Mammary epithelial cell (primary cell): ENCODE measurements at regions of chr5 and their contacts with region 1.

Region 1: DNA sequence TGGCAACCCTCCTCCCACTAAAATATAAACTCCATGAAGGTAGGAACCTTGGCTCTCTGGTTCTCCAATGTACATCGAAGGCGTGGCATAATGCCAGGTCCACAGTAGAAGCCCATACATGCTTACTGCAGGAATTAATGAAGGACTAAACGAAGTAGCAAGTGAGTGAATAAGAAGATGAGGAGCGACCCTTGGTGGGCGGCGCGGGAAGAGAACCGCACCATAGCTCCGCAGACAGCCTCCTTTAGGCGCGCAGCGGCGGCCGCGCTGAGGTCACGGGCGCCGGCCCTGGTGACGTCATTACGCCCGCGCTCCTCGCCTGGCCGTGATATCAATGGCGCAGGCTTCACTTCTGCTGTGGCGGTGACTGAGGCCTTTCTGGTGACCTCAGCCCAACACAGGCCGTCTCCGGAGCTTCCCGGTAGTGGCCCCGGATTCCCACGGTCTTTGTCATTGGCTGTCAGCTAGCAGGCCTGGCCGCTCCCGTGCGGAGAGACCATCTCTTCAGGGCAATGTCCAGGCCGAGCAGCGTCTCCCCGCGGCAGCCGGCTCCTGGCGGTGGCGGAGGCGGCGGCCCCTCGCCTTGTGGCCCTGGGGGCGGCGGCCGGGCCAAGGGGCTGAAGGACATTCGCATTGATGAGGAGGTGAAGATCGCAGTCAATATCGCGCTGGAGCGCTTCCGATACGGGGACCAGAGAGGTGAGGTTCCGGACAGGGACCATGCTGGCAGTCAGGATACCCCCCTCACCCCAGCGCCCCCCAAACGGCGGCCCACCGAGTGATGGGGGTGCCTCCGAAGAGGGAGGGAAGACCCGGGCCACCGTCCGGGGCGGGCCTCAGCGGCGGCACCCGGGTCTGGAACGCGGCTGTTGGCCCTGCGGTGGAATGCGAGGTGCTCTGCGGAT is at the start of gene YTHDC2:
- DNase-seq: peak; percentile 79
- H3K4me3 ChIP-seq: peak within 1 kb of the TSS; percentile 68 to 79 (median 75)
- H3K27ac ChIP-seq: peak within 1 kb of the TSS; percentile 88
- H3K4me1 ChIP-seq: peaks cover 26% of the 10 kb centered on the region
- H3K27me3 ChIP-seq: no peaks in the 10 kb centered on the region
- CTCF ChIP-seq: peak; percentile 7 to 19
- total RNA-seq, gene YTHDC2: 31.3 to 32.1 TPM

Region 2: DNA sequence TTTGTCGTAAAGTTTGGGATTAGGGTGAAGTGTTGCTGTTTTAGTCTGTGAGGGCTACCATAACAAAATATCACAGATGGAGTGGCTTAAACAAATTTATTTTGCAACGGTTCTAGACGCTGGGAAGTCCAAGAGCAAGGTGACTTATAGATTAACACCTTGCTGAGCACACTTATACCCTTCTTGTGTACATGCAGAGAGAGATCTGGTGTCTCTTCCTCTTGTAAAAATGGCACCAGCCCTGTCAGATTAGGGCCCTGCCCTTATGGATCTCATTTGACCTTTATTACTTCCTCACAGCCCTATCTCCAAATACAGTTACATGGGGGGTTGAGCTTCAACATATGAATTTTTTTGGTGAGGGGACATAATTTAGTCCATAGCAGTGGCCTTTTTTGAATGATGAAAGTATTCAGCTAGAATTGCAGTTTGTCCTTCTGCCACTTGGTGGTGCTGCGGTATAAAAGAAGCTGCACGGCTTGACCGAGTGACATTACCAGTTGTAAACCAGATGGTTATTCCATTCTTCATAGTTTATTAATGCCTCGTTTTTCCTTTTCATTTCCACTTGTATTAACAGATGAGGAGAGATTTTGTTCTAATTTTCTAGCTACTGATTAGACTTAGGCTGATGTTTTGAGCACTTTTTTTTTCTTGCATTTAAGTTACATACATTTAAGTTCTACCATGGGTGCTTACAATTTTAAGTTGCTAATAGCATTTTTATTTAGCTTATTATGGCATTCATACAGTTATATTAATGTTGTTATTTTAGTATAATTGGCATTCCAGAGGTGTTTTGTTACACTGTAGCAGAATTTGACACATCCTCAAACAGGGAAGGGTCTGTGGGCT is 517.6 kb before region 1 on chr5:
- CTCF ChIA-PET with region 1: interaction called, 3 read pairs
- dilution Hi-C with region 1: no loop called
- in situ Hi-C with region 1: loop called (anchors 10 to 25 kb)
- intact Hi-C with region 1: loop called (anchors 1 kb)
- DNase-seq: peak; percentile 46
- H3K4me3 ChIP-seq: no peak overlapping the region
- H3K27ac ChIP-seq: no peak overlapping the region
- H3K4me1 ChIP-seq: peaks cover 7% of the 10 kb centered on the region
- H3K27me3 ChIP-seq: no peaks in the 10 kb centered on the region
- CTCF ChIP-seq: peak; percentile 85 to 90

Region 3: GRCh38 chr5:113204525-113205161 is 309.0 kb before region 1 on chr5:
- CTCF ChIA-PET with region 1: no interaction called
- dilution Hi-C with region 1: no loop called
- in situ Hi-C with region 1: no loop called
- intact Hi-C with region 1: loop called (anchors 10 kb)
- DNase-seq: peak; percentile 81
- H3K4me3 ChIP-seq: no peak overlapping the region
- H3K27ac ChIP-seq: peak overlapping the region; percentile 5
- H3K4me1 ChIP-seq: peaks cover 38% of the 10 kb centered on the region
- H3K27me3 ChIP-seq: no peaks in the 10 kb centered on the region
- CTCF ChIP-seq: no peak

Region 4: DNA sequence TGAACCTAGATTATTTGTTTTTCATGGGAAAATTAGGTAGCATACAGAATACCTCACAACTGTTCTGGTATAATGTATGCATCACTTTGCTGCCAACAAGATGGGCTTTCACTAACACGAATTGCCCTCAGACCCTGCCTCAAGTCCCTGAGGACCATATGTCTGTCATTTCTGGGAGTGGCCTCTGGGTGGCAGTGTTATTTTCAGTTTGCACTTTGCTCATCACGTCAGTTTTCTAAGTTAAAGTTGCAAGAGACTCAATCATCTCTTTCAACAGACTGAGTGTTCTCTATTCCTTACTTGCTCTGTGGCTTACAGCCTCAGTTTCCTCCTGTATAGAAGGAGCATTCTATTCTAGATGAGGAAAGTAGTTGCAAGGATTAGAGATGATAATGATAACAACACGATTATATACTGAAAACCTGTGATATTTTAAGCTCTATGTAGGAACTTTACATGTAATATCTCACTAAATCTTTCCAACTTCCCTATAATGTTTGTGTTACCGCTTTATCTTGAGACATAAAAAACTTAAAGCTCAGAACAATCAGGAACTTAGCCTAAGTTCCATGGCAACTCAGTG is 134.6 kb before region 1 on chr5:
- CTCF ChIA-PET with region 1: interaction called, 7 read pairs
- dilution Hi-C with region 1: no loop called
- in situ Hi-C with region 1: loop called in 1 of 2 experiments (anchors 10 kb)
- intact Hi-C with region 1: loop called (anchors 1 kb)
- DNase-seq: peak; percentile 50
- H3K4me3 ChIP-seq: no peak overlapping the region
- H3K27ac ChIP-seq: no peak overlapping the region
- H3K4me1 ChIP-seq: peaks cover 44% of the 10 kb centered on the region
- H3K27me3 ChIP-seq: no peaks in the 10 kb centered on the region
- CTCF ChIP-seq: peak; percentile 76 to 79

Region 5: DNA sequence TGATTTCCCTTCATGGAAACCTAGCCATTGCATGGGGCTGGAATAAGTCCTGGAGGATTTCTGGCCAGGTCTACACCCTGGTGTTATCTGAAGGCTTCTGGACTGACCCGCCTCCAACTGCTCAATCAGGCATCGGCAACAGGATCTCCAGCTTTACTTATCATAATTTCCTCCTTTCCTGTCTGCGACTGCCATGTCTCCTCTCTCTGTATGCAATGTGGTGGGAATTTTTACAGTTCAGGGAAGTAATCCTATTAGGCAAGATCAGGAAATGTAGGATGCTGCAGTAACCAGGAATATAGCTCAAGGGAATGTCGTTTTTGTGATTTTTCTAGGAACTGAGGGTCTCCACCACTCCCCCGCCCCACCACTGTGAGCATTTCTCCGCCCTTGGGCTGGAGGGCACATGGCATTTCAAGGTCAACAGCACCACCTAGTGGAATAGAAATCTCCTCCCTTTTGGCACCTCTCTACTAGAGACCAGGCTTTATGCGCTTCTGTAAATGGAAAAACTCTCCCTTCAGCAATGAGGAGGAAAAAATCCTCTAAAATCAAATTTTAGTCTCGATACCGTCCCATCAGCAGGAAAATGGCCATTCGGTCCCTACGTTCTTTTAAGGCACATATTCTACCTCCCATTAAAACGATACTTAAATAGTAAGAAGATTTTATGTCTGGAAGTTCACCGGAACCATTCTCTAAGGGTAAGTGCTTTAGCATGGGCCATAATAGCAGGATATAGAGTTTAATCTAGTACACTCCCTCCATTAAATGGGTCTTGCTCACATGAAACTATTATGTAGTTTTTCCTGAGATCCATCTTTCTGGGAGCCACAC is 92.9 kb after region 1 on chr5:
- CTCF ChIA-PET with region 1: no interaction called
- dilution Hi-C with region 1: no loop called
- in situ Hi-C with region 1: no loop called
- intact Hi-C with region 1: loop called (anchors 2 kb)
- DNase-seq: peak; percentile 38
- H3K4me3 ChIP-seq: no peak overlapping the region
- H3K27ac ChIP-seq: no peak overlapping the region
- H3K4me1 ChIP-seq: peaks cover 10% of the 10 kb centered on the region
- H3K27me3 ChIP-seq: no peaks in the 10 kb centered on the region
- CTCF ChIP-seq: peak; percentile 70 to 80